Naive thymus-derived CD4-positive, alpha-beta T cell (primary cell): ENCODE measurements at regions of chr14 and their contacts with region 1.

Region 1: GRCh38 chr14:91193069-91193468 is 51.4 kb downstream of the GPR68 start:
- DNase-seq: no peak
- ATAC-seq: no peak
- H3K4me3 ChIP-seq: no peak overlapping the region
- H3K4me3 Mint-ChIP-seq: peak overlapping the region in 2 of 10 donors; percentile 12 to 23
- H3K27ac ChIP-seq: no peak overlapping the region
- H3K27ac Mint-ChIP-seq: peak overlapping the region in 1 of 9 donors; percentile 13
- H3K4me1 ChIP-seq: peaks cover 8 to 9% of the 10 kb centered on the region in 2 donors
- H3K4me1 Mint-ChIP-seq: peaks cover 12 to 51% (median 22%) of the 10 kb centered on the region in 7 donors
- H3K27me3 ChIP-seq: no peaks in the 10 kb centered on the region
- H3K27me3 Mint-ChIP-seq: no peaks in the 10 kb centered on the region

Region 2: GRCh38 chr14:91249841-91250616 is 57.0 kb after region 1 on chr14:
- CTCF ChIA-PET with region 1: interaction called, 3 read pairs
- POLR2A ChIA-PET with region 1: no interaction called
- intact Hi-C with region 1: loop called in 1 of 2 experiments (anchors 5 kb)
- DNase-seq: peak in 4 of 9 donors; percentile 20 to 52 (median 40)
- ATAC-seq: peak; percentile 8
- H3K4me3 ChIP-seq: peak overlapping the region; percentile 36
- H3K4me3 Mint-ChIP-seq: peak overlapping the region; percentile 27 to 84 (median 57)
- H3K27ac ChIP-seq: peak overlapping the region; percentile 55
- H3K27ac Mint-ChIP-seq: peak overlapping the region; percentile 53 to 98 (median 91)
- H3K4me1 ChIP-seq: peaks cover 63 to 81% of the 10 kb centered on the region in 2 donors
- H3K4me1 Mint-ChIP-seq: peaks cover 54 to 87% (median 80%) of the 10 kb centered on the region in 7 donors
- H3K27me3 ChIP-seq: no peaks in the 10 kb centered on the region
- H3K27me3 Mint-ChIP-seq: no peaks in the 10 kb centered on the region

Region 3: DNA sequence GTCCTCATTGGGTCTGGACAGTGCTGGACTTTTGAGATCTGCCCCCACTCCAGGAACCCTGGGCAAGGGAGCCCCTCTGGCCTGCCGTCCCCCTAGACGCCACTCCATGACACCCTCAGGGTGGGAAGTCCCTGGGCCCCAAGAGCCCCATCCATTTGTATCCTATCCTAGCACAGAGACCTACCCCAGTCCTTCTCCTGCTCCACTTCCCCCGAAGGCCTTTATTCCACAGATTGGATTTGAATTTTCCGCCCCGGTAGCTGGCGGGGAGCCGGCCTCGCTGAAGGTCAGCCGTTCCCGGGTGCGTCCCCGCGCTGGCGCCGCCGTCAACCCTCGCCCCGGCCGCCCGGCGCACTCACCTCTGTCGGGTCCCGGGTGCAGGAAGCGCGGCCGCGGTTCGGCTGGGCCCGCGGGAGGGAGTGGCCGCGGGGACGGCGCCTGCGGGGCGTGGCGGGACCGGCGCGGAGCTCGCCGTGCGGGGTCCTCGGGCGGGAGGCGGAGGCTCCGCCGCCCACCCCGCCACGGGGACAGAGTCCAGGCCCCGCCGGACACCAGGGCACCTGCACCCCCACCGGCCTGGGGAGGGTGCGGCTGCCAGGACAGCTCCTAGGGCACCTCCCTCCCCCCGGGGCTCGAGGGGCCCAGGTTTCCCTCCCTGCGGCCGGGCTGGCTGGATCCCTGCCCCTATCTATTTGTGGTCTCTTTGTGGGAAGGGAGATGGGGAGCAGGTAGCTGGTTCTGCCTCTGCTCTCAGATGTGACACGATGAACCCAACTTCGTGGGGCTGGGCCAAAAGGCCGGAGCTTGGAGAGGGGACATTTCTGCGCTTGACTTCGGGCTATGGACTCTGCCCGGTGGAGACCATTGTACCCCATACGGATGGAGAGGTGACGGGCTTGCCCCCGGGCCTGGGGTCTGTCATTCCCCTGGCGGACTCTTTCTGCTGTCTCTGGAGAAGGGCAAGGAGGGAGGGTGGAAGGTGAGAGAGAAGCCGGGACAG is 71.4 kb after region 1 on chr14:
- CTCF ChIA-PET with region 1: no interaction called
- POLR2A ChIA-PET with region 1: interaction called, 4 read pairs
- intact Hi-C with region 1: loop called in 1 of 2 experiments (anchors 5 kb)
- DNase-seq: peak in 1 of 9 donors; percentile 23
- ATAC-seq: peak; percentile 58
- H3K4me3 ChIP-seq: no peak overlapping the region
- H3K4me3 Mint-ChIP-seq: peak overlapping the region; percentile 61 to 80 (median 74)
- H3K27ac ChIP-seq: no peak overlapping the region
- H3K27ac Mint-ChIP-seq: peak overlapping the region in 8 of 9 donors; percentile 56 to 89 (median 72)
- H3K4me1 ChIP-seq: peaks cover 5 to 12% of the 10 kb centered on the region in 2 donors
- H3K4me1 Mint-ChIP-seq: peaks cover 28 to 73% (median 43%) of the 10 kb centered on the region in 7 donors
- H3K27me3 ChIP-seq: no peaks in the 10 kb centered on the region
- H3K27me3 Mint-ChIP-seq: peaks cover 0 to 13% (median 0%) of the 10 kb centered on the region in 5 donors

Region 4: GRCh38 chr14:91286530-91286937 is 93.5 kb after region 1 on chr14:
- CTCF ChIA-PET with region 1: interaction called, 9 read pairs
- POLR2A ChIA-PET with region 1: no interaction called
- intact Hi-C with region 1: loop called in 1 of 2 experiments (anchors 1 kb)
- DNase-seq: peak; percentile 55 to 77 (median 69)
- ATAC-seq: peak; percentile 89
- H3K4me3 ChIP-seq: no peak overlapping the region
- H3K4me3 Mint-ChIP-seq: peak overlapping the region in 1 of 10 donors; percentile 35
- H3K27ac ChIP-seq: no peak overlapping the region
- H3K27ac Mint-ChIP-seq: peak overlapping the region; percentile 2 to 86 (median 63)
- H3K4me1 ChIP-seq: no peaks in the 10 kb centered on the region
- H3K4me1 Mint-ChIP-seq: peaks cover 11 to 25% (median 17%) of the 10 kb centered on the region in 7 donors
- H3K27me3 ChIP-seq: no peaks in the 10 kb centered on the region
- H3K27me3 Mint-ChIP-seq: no peaks in the 10 kb centered on the region

Region 5: GRCh38 chr14:91317381-91318308 is 124.6 kb after region 1 on chr14:
- CTCF ChIA-PET with region 1: no interaction called
- POLR2A ChIA-PET with region 1: no interaction called
- intact Hi-C with region 1: no loop called
- DNase-seq: peak; percentile 58 to 86 (median 84)
- ATAC-seq: peak; percentile 60
- H3K4me3 ChIP-seq: peak overlapping the region; percentile 39
- H3K4me3 Mint-ChIP-seq: peak overlapping the region; percentile 73 to 88 (median 81)
- H3K27ac ChIP-seq: peak overlapping the region; percentile 82
- H3K27ac Mint-ChIP-seq: peak overlapping the region; percentile 93 to 99 (median 98)
- H3K4me1 ChIP-seq: peaks cover 58 to 61% of the 10 kb centered on the region in 2 donors
- H3K4me1 Mint-ChIP-seq: peaks cover 55 to 88% (median 70%) of the 10 kb centered on the region in 7 donors
- H3K27me3 ChIP-seq: no peaks in the 10 kb centered on the region
- H3K27me3 Mint-ChIP-seq: no peaks in the 10 kb centered on the region

Region 6: GRCh38 chr14:91925001-91925726 is 732.1 kb after region 1 on chr14:
- CTCF ChIA-PET with region 1: no interaction called
- POLR2A ChIA-PET with region 1: no interaction called
- intact Hi-C with region 1: no loop called
- DNase-seq: no peak
- ATAC-seq: no peak
- H3K4me3 ChIP-seq: no peak overlapping the region
- H3K4me3 Mint-ChIP-seq: no peak overlapping the region
- H3K27ac ChIP-seq: no peak overlapping the region
- H3K27ac Mint-ChIP-seq: no peak overlapping the region
- H3K4me1 ChIP-seq: no peaks in the 10 kb centered on the region
- H3K4me1 Mint-ChIP-seq: no peaks in the 10 kb centered on the region
- H3K27me3 ChIP-seq: no peaks in the 10 kb centered on the region
- H3K27me3 Mint-ChIP-seq: peaks cover 0 to 4% (median 0%) of the 10 kb centered on the region in 5 donors